Activated naive CD4-positive, alpha-beta T cell treated with anti-CD3 and anti-CD28 coated beads for 36 hours (primary cell): ENCODE measurements at regions of chr11 and their contacts with region 1.

Region 1: GRCh38 chr11:131674051-131674755 is 303.8 kb downstream of the NTM start:
- DNase-seq: peak; percentile 72
- H3K4me3 Mint-ChIP-seq: no peak overlapping the region
- H3K27ac Mint-ChIP-seq: no peak overlapping the region
- H3K4me1 Mint-ChIP-seq: no peaks in the 10 kb centered on the region
- H3K27me3 Mint-ChIP-seq: peaks cover 3% of the 10 kb centered on the region

Region 2: DNA sequence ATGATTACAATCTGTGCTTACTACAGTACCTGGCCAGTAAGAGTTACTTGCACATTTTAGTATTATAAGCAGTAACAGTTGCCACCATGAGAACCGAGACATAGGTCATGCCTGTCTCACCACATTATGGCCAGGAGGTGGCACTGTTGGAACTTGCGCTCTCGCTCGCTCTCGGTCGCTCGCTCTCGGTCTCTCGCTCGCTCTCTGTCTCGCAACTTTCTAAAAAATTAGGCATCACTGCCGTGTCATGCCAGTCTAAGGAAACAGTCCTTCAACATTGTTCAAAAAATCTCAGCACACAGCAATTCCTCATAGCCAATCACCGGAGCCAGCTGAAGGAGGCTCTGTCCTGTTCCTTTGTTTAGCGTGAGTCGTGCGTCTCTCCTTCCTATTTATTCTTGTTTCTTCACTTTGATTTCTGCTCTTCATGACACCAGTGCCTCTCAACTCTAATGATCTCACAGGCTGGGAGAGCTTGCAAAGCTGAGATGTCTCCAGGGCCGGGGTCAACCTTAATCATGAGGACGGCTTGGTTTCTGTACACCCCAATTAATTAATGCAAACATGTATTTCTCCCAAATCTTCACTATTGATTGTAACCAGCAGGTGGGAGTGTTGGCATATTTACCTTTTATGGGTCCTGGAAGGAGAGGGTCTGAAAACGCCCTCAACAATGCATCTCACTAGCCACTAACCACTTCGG is 1239.5 kb before region 1 on chr11:
- CTCF ChIA-PET with region 1: no interaction called
- intact Hi-C with region 1: no loop called
- DNase-seq: peak; percentile 79
- H3K4me3 Mint-ChIP-seq: no peak overlapping the region
- H3K27ac Mint-ChIP-seq: no peak overlapping the region
- H3K4me1 Mint-ChIP-seq: peaks cover 9% of the 10 kb centered on the region
- H3K27me3 Mint-ChIP-seq: peaks cover 11% of the 10 kb centered on the region

Region 3: GRCh38 chr11:131064373-131064991 is 609.7 kb before region 1 on chr11:
- CTCF ChIA-PET with region 1: interaction called, 17 read pairs
- intact Hi-C with region 1: loop called (anchors 1 kb)
- DNase-seq: peak; percentile 46
- H3K4me3 Mint-ChIP-seq: no peak overlapping the region
- H3K27ac Mint-ChIP-seq: no peak overlapping the region
- H3K4me1 Mint-ChIP-seq: no peaks in the 10 kb centered on the region
- H3K27me3 Mint-ChIP-seq: peaks cover 8% of the 10 kb centered on the region

Region 4: DNA sequence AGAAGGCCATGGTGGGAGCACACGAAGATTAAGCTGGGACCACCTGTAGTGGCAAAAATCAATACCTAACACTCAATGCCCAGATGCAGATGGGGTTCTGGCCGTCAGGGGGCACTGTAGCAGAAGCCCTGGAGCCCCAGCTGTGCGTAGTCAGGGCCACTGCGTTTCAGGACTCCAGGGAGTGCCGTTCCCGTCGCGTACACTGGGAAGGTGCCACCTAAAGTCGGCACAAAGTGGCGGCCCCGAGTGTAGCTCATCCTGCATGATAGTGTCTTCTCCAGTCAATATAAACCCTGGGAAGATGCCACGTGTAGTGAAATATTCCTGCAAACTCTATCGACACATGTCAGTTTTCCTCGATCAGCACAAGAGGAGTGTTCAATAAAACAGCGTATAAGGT is 427.5 kb before region 1 on chr11:
- CTCF ChIA-PET with region 1: interaction called, 3 read pairs
- intact Hi-C with region 1: loop called (anchors 5 kb)
- DNase-seq: peak; percentile 22
- H3K4me3 Mint-ChIP-seq: no peak overlapping the region
- H3K27ac Mint-ChIP-seq: no peak overlapping the region
- H3K4me1 Mint-ChIP-seq: no peaks in the 10 kb centered on the region
- H3K27me3 Mint-ChIP-seq: peaks cover 33% of the 10 kb centered on the region

Region 5: GRCh38 chr11:131408025-131408640 is 266.1 kb before region 1 on chr11:
- CTCF ChIA-PET with region 1: no interaction called
- intact Hi-C with region 1: loop called (anchors 10 kb)
- DNase-seq: peak; percentile 7
- H3K4me3 Mint-ChIP-seq: no peak overlapping the region
- H3K27ac Mint-ChIP-seq: no peak overlapping the region
- H3K4me1 Mint-ChIP-seq: no peaks in the 10 kb centered on the region
- H3K27me3 Mint-ChIP-seq: no peaks in the 10 kb centered on the region

Region 6: GRCh38 chr11:131572423-131572822 is 101.8 kb before region 1 on chr11:
- CTCF ChIA-PET with region 1: no interaction called
- intact Hi-C with region 1: no loop called
- DNase-seq: no peak
- H3K4me3 Mint-ChIP-seq: no peak overlapping the region
- H3K27ac Mint-ChIP-seq: no peak overlapping the region
- H3K4me1 Mint-ChIP-seq: no peaks in the 10 kb centered on the region
- H3K27me3 Mint-ChIP-seq: peaks cover 8% of the 10 kb centered on the region